ENCODE measurements at regions of chr6 and their contacts with region 1.

Region 1: DNA sequence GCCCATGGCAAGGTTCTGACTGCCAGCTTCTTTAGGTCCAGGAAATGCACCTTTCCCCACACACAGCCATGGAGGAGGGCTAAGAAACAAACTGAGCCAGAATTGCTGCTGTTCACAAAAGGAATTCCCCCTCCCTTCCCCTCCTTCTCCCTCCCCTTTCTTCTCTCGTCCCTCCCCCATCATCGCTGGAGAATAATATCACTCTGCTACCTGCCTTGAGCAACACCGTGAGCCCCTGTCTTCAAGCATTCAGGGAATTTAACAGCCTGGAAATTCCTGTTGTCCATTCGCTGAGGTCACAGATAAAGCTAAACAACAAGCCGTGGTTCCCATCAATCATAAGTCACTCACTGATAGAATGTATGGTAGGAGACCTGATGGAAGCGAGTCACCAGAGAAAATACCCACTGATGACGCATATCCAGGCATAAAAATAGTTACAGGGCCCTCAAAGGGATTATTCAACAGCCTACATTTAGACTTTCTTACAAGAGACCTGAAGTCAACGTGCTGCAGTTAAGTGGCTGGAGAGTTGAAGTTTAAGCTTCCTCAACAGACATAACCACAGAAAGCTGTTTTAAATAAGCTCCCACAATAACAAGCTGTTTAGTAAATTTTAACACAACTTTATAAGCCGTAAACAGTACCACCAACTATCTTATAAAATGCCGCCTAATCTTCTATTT is 59.7 kb downstream of the HIVEP2 start:
- DNase-seq: peak; percentile 58
- ATAC-seq: peak; percentile 83
- H3K4me3 Mint-ChIP-seq: peak overlapping the region; percentile 81
- H3K27ac Mint-ChIP-seq: peak overlapping the region; percentile 95
- H3K4me1 Mint-ChIP-seq: peaks cover 78% of the 10 kb centered on the region
- H3K27me3 Mint-ChIP-seq: no peaks in the 10 kb centered on the region

Region 2: GRCh38 chr6:142871910-142872331 is 13.4 kb before region 1 on chr6:
- CTCF ChIA-PET with region 1: interaction called, 20 read pairs
- POLR2A ChIA-PET with region 1: interaction called, 8 read pairs
- DNase-seq: peak; percentile 76
- ATAC-seq: peak; percentile 92
- H3K4me3 Mint-ChIP-seq: peak overlapping the region; percentile 35
- H3K27ac Mint-ChIP-seq: peak overlapping the region; percentile 62
- H3K4me1 Mint-ChIP-seq: peaks cover 79% of the 10 kb centered on the region
- H3K27me3 Mint-ChIP-seq: no peaks in the 10 kb centered on the region

Region 3: GRCh38 chr6:142902636-142903053 is 17.3 kb after region 1 on chr6:
- CTCF ChIA-PET with region 1: interaction called, 11 read pairs
- POLR2A ChIA-PET with region 1: interaction called, 7 read pairs
- DNase-seq: peak; percentile 79
- ATAC-seq: peak; percentile 74
- H3K4me3 Mint-ChIP-seq: peak overlapping the region; percentile 66
- H3K27ac Mint-ChIP-seq: peak overlapping the region; percentile 93
- H3K4me1 Mint-ChIP-seq: peaks cover 66% of the 10 kb centered on the region
- H3K27me3 Mint-ChIP-seq: no peaks in the 10 kb centered on the region

Region 4: GRCh38 chr6:142946181-142946923 is 61.0 kb after region 1 on chr6:
- CTCF ChIA-PET with region 1: interaction called, 8 read pairs
- POLR2A ChIA-PET with region 1: interaction called, 17 read pairs
- DNase-seq: peak; percentile 88
- ATAC-seq: peak; percentile 42
- H3K4me3 Mint-ChIP-seq: peak overlapping the region; percentile 100
- H3K27ac Mint-ChIP-seq: peak overlapping the region; percentile 94
- H3K4me1 Mint-ChIP-seq: peaks cover 38% of the 10 kb centered on the region
- H3K27me3 Mint-ChIP-seq: peaks cover 3% of the 10 kb centered on the region

Measured in activated CD8-positive, alpha-beta T cell treated with anti-CD3 and anti-CD28 coated beads, Interleukin-2, amount 10 ng/mL, durations not matched to agents 7 days and 5 days (primary cell).